PC-3 (cell line): ENCODE measurements at regions of chr11 and their contacts with region 1.

Region 1: GRCh38 chr11:33736148-33736809 is at the start of gene CD59:
- DNase-seq: peak; percentile 94
- ATAC-seq: peak; percentile 81
- H3K4me3 ChIP-seq: peak within 1 kb of the TSS; percentile 85
- H3K27ac ChIP-seq: peak within 1 kb of the TSS; percentile 91
- H3K4me1 ChIP-seq: peaks cover 47% of the 10 kb centered on the region
- H3K27me3 ChIP-seq: no peaks in the 10 kb centered on the region
- CTCF ChIP-seq: no peak
- total RNA-seq, gene CD59: 134 and 170 TPM in 2 replicates

Region 2: GRCh38 chr11:33463059-33463458 is 273.2 kb before region 1 on chr11:
- CTCF ChIA-PET with region 1: no interaction called
- POLR2A ChIA-PET with region 1: no interaction called
- intact Hi-C with region 1: no loop called
- DNase-seq: no peak
- ATAC-seq: no peak
- H3K4me3 ChIP-seq: no peak overlapping the region
- H3K27ac ChIP-seq: no peak overlapping the region
- H3K4me1 ChIP-seq: no peaks in the 10 kb centered on the region
- H3K27me3 ChIP-seq: no peaks in the 10 kb centered on the region
- CTCF ChIP-seq: no peak

Region 3: DNA sequence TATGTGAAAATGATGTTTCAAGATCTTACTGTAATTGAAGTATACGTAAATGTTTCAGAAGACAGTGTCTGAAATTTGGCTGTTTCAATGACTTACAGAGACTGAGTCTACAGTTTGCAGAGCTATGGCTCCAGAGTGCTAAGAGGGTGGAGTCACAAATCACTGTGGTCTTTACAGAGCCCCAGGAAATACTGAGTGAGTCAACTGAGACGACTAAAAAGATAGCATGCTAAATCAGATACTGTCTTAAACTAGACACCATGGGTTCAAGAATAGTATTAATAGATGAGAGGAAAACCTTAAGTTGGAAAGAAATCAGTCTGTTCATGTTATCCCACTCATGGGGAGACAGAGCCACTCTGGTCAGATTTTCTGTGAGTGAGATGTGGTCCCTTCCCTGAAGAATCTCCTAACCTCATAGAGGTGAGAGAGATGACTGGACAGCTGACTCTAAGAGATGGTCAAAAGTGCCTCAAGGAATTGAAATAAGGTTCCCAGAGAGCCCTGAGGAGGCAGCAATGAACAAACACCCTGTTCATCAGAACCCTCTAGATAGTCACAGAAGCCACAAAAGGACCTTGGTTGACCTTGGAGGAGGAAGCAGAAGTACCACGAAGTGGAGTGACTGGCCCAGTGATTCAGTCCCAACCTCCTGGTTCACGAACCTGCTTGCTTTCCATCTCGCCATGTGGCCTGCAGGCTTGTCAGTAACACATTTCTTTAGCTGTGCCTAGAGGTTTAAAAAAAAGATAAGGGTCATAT is 65.8 kb before region 1 on chr11:
- CTCF ChIA-PET with region 1: no interaction called
- POLR2A ChIA-PET with region 1: no interaction called
- intact Hi-C with region 1: no loop called
- DNase-seq: peak; percentile 33
- ATAC-seq: no peak
- H3K4me3 ChIP-seq: no peak overlapping the region
- H3K27ac ChIP-seq: no peak overlapping the region
- H3K4me1 ChIP-seq: peaks cover 6% of the 10 kb centered on the region; the same call in 1 of the 2 replicates
- H3K27me3 ChIP-seq: no peaks in the 10 kb centered on the region
- CTCF ChIP-seq: no peak

Region 4: DNA sequence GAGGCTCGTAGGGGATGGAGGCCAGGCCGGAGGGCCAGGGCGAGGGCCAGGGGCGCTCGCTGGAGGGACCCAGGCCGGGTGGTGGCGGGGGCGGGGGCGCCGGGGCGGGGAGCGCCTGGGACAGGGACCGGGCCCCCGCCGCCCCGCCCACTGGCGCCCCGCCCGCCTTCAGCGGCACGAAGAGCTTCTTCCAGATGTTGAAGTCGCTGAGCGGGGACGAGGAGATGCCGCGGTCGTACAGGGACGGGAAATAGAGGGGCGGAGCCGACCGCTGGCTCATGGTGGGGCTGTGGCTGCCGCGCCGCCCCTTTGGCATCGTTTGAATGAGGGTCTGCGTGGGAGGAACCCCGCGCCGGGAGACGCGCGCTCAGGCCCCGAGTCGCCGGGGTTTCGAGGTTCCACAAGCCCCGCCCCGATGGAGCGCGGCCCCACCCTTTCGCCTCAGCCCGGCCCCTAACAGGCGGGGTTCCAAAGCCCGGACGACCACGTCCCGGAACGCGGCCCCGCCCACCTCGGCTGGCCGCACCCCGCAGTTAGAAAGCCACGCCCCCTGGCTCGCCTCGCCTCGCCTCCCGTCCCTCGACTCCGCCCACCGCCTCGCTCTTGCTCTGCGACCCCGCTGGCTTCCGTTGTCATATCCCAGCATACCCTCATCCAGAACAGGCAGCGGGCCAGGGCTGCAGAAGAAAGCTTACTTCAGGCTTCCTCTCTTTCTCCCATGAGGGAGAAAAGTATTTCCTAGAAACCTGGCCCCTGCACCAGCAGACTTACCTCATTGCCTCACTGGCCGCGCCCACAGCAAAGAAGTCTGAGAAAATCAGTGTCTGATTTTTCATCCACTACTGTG is 35.6 kb before region 1 on chr11 and contains the start of gene C11orf91:
- CTCF ChIA-PET with region 1: interaction called, 5 read pairs
- POLR2A ChIA-PET with region 1: interaction called, 21 read pairs
- intact Hi-C with region 1: loop called (anchors 2 kb)
- DNase-seq: peak; percentile 93
- ATAC-seq: peak; percentile 45
- H3K4me3 ChIP-seq: peak within 1 kb of the TSS; percentile 61
- H3K27ac ChIP-seq: peak within 1 kb of the TSS; percentile 99
- H3K4me1 ChIP-seq: peaks cover 67% of the 10 kb centered on the region
- H3K27me3 ChIP-seq: no peaks in the 10 kb centered on the region
- CTCF ChIP-seq: no peak
- total RNA-seq, gene C11orf91: 1.0 TPM in 1 of 2 replicates, not detected in the other

Region 5: GRCh38 chr11:33716236-33716635 is 20.0 kb before region 1 on chr11:
- CTCF ChIA-PET with region 1: interaction called, 16 read pairs
- POLR2A ChIA-PET with region 1: interaction called, 5 read pairs
- intact Hi-C with region 1: no loop called
- DNase-seq: peak; percentile 65
- ATAC-seq: peak; percentile 58
- H3K4me3 ChIP-seq: no peak overlapping the region
- H3K27ac ChIP-seq: peak overlapping the region; percentile 85
- H3K4me1 ChIP-seq: peaks cover 57% of the 10 kb centered on the region
- H3K27me3 ChIP-seq: no peaks in the 10 kb centered on the region
- CTCF ChIP-seq: peak; percentile 59

Region 6: GRCh38 chr11:33722579-33723225 is 13.6 kb before region 1 on chr11:
- CTCF ChIA-PET with region 1: no interaction called
- POLR2A ChIA-PET with region 1: interaction called, 4 read pairs
- intact Hi-C with region 1: loop called (anchors 2 kb)
- DNase-seq: peak; percentile 86
- ATAC-seq: peak; percentile 49
- H3K4me3 ChIP-seq: peak overlapping the region; percentile 17; the same call in 1 of the 2 replicates
- H3K27ac ChIP-seq: peak overlapping the region; percentile 99
- H3K4me1 ChIP-seq: peaks cover 70% of the 10 kb centered on the region
- H3K27me3 ChIP-seq: no peaks in the 10 kb centered on the region
- CTCF ChIP-seq: no peak

Region 7: GRCh38 chr11:33753304-33753967 is 17.2 kb after region 1 on chr11:
- CTCF ChIA-PET with region 1: no interaction called
- POLR2A ChIA-PET with region 1: no interaction called
- intact Hi-C with region 1: no loop called
- DNase-seq: peak; percentile 21
- ATAC-seq: peak; percentile 50
- H3K4me3 ChIP-seq: no peak overlapping the region
- H3K27ac ChIP-seq: no peak overlapping the region
- H3K4me1 ChIP-seq: peaks cover 10% of the 10 kb centered on the region; the same call in 1 of the 2 replicates
- H3K27me3 ChIP-seq: no peaks in the 10 kb centered on the region
- CTCF ChIP-seq: no peak

Region 8: DNA sequence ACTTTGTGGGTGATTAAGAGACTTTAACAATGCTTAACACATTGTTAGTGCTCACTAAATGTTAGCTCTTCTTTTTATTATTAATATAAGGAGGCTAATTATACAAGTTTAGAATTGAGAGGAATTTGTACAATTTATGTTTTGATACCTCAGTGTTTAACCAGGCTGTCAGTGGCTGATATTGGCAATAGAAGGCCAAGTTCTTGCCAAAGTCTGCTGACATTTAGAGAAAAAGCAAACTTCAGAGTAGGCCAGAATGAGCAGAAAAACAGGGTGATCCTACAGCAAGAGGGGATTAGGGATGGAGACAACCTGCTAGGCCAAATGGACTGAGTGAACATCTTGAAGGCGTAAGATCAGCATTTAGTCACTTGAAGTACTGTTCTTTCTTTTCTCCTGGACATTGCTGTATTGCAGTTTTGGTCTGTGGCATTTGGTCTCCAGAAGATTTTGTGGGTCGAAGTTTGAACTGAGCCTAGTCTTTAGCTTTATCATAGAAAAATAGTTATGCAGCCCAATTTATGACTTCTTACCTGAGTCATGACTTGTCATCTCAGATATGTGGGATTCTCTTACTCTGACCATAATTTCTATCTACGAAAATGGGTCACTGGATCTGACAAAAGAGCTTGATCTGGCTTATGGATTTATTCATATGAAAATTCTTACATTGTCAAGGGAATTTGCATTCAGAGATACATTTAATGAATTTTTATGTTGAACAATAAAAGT is 1935.3 kb after region 1 on chr11:
- CTCF ChIA-PET with region 1: no interaction called
- POLR2A ChIA-PET with region 1: interaction called, 19 read pairs
- intact Hi-C with region 1: no loop called
- DNase-seq: peak; percentile 59
- ATAC-seq: no peak; the same call in 1 of the 2 replicates
- H3K4me3 ChIP-seq: no peak overlapping the region
- H3K27ac ChIP-seq: no peak overlapping the region
- H3K4me1 ChIP-seq: peaks cover 23% of the 10 kb centered on the region
- H3K27me3 ChIP-seq: no peaks in the 10 kb centered on the region
- CTCF ChIP-seq: no peak